ENCODE measurements at regions of chr16 and their contacts with region 1.

Region 1: GRCh38 chr16:75043175-75043895 is 44.5 kb downstream of the ZNRF1 start:
- DNase-seq: no peak
- ATAC-seq: peak in 3 of 4 donors; percentile 5 to 11 (median 10)
- H3K4me3 ChIP-seq: no peak overlapping the region
- H3K27ac ChIP-seq: peak overlapping the region; percentile 7 to 91 (median 67)
- H3K4me1 ChIP-seq: peaks cover 0 to 75% (median 55%) of the 10 kb centered on the region in 12 donors
- H3K27me3 ChIP-seq: no peaks in the 10 kb centered on the region
- CTCF ChIP-seq: no peak
- POLR2A ChIP-seq: no peak

Region 2: GRCh38 chr16:74998481-74999218 is 44.7 kb before region 1 on chr16 and contains the start of gene ZNRF1:
- intact Hi-C with region 1: loop called in 4 of 10 experiments (anchors 1 to 5 kb)
- DNase-seq: peak; percentile 87 to 94 (median 89)
- ATAC-seq: peak; percentile 74 to 89 (median 87)
- H3K4me3 ChIP-seq: peak within 1 kb of the TSS; percentile 65 to 99 (median 94)
- H3K27ac ChIP-seq: peak within 1 kb of the TSS; percentile 16 to 93 (median 88)
- H3K4me1 ChIP-seq: peaks cover 3 to 49% (median 33%) of the 10 kb centered on the region in 12 donors
- H3K27me3 ChIP-seq: no peaks in the 10 kb centered on the region
- CTCF ChIP-seq: peak; percentile 63 to 87 (median 82)
- POLR2A ChIP-seq: no peak
- total RNA-seq, gene ZNRF1: 20.5 to 43.3 (median 23.9) TPM

Region 3: DNA sequence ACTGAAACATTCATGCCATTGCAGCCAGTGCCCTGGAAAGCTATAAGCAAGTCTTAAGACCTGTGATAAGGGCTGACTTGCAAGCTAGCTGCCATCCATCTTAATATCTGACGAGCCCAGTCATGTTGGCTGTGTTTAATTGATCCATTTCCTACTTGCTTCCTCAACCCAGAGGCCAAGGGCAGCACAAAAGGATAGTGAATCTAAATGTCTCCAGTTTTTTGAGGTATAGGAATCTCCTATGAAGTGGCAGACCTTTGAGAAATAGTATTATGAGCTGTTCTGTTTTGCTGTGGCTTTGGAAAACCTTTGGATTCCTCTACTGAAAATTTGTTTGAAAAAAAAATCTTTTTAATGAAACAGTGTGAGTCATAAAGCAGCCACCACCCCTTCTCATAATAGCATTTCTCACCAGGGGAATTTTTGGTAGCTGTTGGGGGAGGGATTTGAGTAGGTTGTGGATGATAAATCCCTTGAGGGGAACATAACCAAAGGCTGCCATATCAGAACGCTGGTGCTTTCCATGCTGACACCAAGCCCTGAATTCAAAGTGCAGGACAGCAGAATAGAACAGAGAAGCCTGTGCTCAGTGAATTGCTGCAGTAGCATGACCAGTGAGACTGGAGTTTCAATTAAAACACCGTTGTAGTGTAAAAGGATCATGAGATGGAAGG is 31.6 kb before region 1 on chr16:
- intact Hi-C with region 1: loop called in 3 of 10 experiments (anchors 5 kb)
- DNase-seq: peak in 1 of 5 donors; percentile 32
- ATAC-seq: peak; percentile 20 to 88 (median 86)
- H3K4me3 ChIP-seq: peak overlapping the region in 3 of 12 donors; percentile 3 to 10 (median 9)
- H3K27ac ChIP-seq: peak overlapping the region; percentile 45 to 86 (median 80)
- H3K4me1 ChIP-seq: peaks cover 5 to 44% (median 37%) of the 10 kb centered on the region in 12 donors
- H3K27me3 ChIP-seq: no peaks in the 10 kb centered on the region
- CTCF ChIP-seq: no peak
- POLR2A ChIP-seq: no peak

Region 4: GRCh38 chr16:75099756-75100602 is 56.6 kb after region 1 on chr16:
- intact Hi-C with region 1: loop called in 4 of 10 experiments (anchors 5 to 10 kb)
- DNase-seq: peak; percentile 59 to 74 (median 68)
- ATAC-seq: peak; percentile 43 to 86 (median 68)
- H3K4me3 ChIP-seq: no peak overlapping the region
- H3K27ac ChIP-seq: peak overlapping the region; percentile 20 to 81 (median 70)
- H3K4me1 ChIP-seq: peaks cover 7 to 44% (median 38%) of the 10 kb centered on the region in 12 donors
- H3K27me3 ChIP-seq: no peaks in the 10 kb centered on the region
- CTCF ChIP-seq: peak in 3 of 12 donors; percentile 8 to 35 (median 19)
- POLR2A ChIP-seq: no peak

Measured in heart left ventricle (tissue), 16 donors.